ENCODE measurements at regions of chr5 and their contacts with region 1.

Region 1: GRCh38 chr5:33470544-33470943 is 29.8 kb downstream of the TARS1 start:
- DNase-seq: no peak
- H3K4me3 ChIP-seq: no peak overlapping the region
- H3K27ac ChIP-seq: no peak overlapping the region
- H3K4me1 ChIP-seq: no peaks in the 10 kb centered on the region
- H3K27me3 ChIP-seq: no peaks in the 10 kb centered on the region
- CTCF ChIP-seq: peak in 2 of 5 experiments; percentile 2 to 16
- EP300 ChIP-seq: no peak
- POLR2A ChIP-seq: no peak

Region 2: DNA sequence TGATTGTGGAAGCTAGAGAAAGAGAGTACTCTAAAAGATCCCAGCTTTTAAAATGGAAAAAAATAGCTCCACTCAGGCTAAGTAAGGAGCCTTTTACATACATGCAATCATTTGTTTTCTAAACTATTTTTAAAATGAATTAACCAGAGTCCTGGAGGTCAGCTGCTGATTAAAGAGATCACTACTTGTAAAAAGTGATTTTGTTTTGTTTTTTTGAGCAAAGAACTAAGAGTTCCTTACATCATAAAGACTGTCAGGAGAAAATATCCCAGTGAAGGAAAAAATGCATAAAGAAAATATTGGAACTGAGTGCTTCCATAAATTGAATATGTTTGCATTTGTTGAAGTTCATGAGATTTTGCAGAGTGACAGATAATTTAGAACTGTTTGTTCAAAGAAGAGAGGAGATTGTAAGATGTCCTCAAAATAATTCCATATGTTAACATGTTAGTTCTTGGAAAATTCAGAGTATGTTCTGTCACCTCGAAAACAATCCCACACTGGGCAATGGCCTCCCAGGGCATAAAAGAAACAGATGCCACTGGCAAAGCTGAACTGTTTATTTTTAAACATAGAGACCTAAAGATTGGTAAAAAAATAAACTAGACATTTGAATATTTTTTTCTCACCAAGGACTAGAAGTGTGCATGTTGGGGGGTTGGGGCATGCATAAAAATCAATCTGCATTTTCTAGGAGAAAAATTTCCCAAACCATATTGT is 494.7 kb before region 1 on chr5:
- in situ Hi-C with region 1: no loop called
- intact Hi-C with region 1: no loop called
- DNase-seq: no peak
- H3K4me3 ChIP-seq: no peak overlapping the region
- H3K27ac ChIP-seq: peak overlapping the region in 2 of 4 donors; percentile 1 to 41
- H3K4me1 ChIP-seq: no peaks in the 10 kb centered on the region
- H3K27me3 ChIP-seq: no peaks in the 10 kb centered on the region
- CTCF ChIP-seq: no peak
- EP300 ChIP-seq: no peak
- POLR2A ChIP-seq: no peak

Region 3: GRCh38 chr5:33343676-33344327 is 126.7 kb before region 1 on chr5:
- in situ Hi-C with region 1: no loop called
- intact Hi-C with region 1: no loop called
- DNase-seq: no peak
- H3K4me3 ChIP-seq: no peak overlapping the region
- H3K27ac ChIP-seq: peak overlapping the region in 2 of 4 donors; percentile 19 to 31
- H3K4me1 ChIP-seq: peaks cover 0 to 18% (median 3%) of the 10 kb centered on the region in 4 donors
- H3K27me3 ChIP-seq: no peaks in the 10 kb centered on the region
- CTCF ChIP-seq: no peak
- EP300 ChIP-seq: no peak
- POLR2A ChIP-seq: no peak

Region 4: DNA sequence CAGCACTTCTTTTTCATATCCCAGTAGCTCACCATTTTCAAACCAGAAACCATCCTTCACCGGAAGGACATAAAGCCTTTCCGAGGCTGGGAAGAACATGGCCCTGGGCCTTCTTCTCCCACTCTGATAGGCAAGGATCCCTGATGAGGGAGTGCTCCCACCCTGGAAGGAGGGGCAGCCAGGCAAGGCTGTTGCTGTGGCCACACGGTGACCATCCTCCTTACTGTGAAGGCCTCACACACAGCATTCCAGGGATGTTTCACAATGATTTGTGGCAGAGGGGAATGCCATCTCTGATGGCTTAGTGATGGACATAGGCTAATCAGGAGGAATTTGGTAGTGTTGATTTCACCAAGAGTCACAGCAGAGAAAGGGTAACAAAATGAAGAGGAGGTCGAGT is 290.6 kb after region 1 on chr5:
- in situ Hi-C with region 1: no loop called
- intact Hi-C with region 1: loop called (anchors 10 kb)
- DNase-seq: no peak
- H3K4me3 ChIP-seq: no peak overlapping the region
- H3K27ac ChIP-seq: no peak overlapping the region
- H3K4me1 ChIP-seq: no peaks in the 10 kb centered on the region
- H3K27me3 ChIP-seq: no peaks in the 10 kb centered on the region
- CTCF ChIP-seq: no peak
- EP300 ChIP-seq: no peak
- POLR2A ChIP-seq: no peak

Region 5: DNA sequence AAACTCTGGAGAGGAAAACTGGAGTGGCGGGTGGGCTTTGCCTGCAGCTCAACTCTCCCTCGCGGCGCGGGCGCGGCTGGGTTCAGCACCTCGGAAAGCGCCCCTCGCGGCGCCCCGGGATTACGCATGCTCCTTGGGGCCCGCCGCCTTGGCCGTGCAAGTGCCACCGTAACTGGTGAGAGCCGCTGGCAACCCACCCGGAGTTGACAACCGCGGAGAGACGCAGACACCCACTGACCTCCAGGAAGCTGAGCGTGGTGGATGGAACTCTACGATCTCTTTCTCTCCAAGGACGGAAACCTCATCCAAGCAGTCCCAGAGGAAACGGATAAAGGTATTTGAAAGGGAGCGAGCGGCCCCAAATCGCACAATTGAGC is 465.4 kb after region 1 on chr5:
- in situ Hi-C with region 1: loop called in 1 of 4 experiments (anchors 25 kb)
- intact Hi-C with region 1: no loop called
- DNase-seq: peak; percentile 15
- H3K4me3 ChIP-seq: peak overlapping the region in 1 of 4 donors; percentile 35
- H3K27ac ChIP-seq: no peak overlapping the region
- H3K4me1 ChIP-seq: peaks cover 0 to 12% (median 7%) of the 10 kb centered on the region in 4 donors
- H3K27me3 ChIP-seq: peaks cover 54% of the 10 kb centered on the region
- CTCF ChIP-seq: peak in 4 of 5 experiments; percentile 20 to 35 (median 26)
- EP300 ChIP-seq: no peak
- POLR2A ChIP-seq: no peak

Measured in transverse colon (tissue), 4 donors.